CD8-positive, alpha-beta memory T cell (primary cell): ENCODE measurements at regions of chr15 and their contacts with region 1.

Region 1: DNA sequence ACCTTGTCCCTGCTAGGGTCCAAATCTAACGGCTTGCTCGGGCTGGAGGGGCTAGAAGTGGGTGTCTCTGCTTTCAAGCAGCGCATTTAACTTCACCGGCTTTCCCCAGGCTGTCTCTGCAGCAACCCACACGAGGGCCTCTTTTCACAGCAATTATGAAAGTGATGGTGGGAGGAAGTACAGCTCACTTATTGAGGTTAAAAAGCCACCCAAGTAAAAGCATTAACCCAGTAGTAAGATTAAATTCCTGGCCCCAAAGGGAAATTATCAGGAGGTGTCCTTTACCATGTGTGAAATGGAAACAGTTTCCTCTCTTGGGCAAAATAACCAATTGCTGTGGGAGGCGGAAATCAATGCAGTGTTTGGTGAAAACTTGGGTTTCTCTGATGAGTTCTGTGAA is 41.1 kb downstream of the NGRN start:
- DNase-seq: peak in 1 of 5 donors; percentile 6
- H3K4me3 ChIP-seq: no peak overlapping the region
- H3K4me3 Mint-ChIP-seq: peak overlapping the region in 6 of 7 donors; percentile 54 to 71 (median 63)
- H3K27ac ChIP-seq: no peak overlapping the region
- H3K27ac Mint-ChIP-seq: peak overlapping the region; percentile 2 to 93 (median 84)
- H3K4me1 ChIP-seq: peaks cover 18% of the 10 kb centered on the region
- H3K4me1 Mint-ChIP-seq: peaks cover 20 to 27% (median 26%) of the 10 kb centered on the region in 3 donors
- H3K27me3 ChIP-seq: no peaks in the 10 kb centered on the region
- H3K27me3 Mint-ChIP-seq: peaks cover 0 to 1% of the 10 kb centered on the region in 2 donors

Region 2: GRCh38 chr15:90294601-90295269 is 11.8 kb before region 1 on chr15:
- CTCF ChIA-PET with region 1: interaction called, 14 read pairs
- POLR2A ChIA-PET with region 1: no interaction called
- DNase-seq: no peak
- H3K4me3 ChIP-seq: no peak overlapping the region
- H3K4me3 Mint-ChIP-seq: no peak overlapping the region
- H3K27ac ChIP-seq: no peak overlapping the region
- H3K27ac Mint-ChIP-seq: no peak overlapping the region
- H3K4me1 ChIP-seq: no peaks in the 10 kb centered on the region
- H3K4me1 Mint-ChIP-seq: peaks cover 2 to 7% (median 5%) of the 10 kb centered on the region in 3 donors
- H3K27me3 ChIP-seq: no peaks in the 10 kb centered on the region
- H3K27me3 Mint-ChIP-seq: peaks cover 2 to 4% of the 10 kb centered on the region in 2 donors

Region 3: DNA sequence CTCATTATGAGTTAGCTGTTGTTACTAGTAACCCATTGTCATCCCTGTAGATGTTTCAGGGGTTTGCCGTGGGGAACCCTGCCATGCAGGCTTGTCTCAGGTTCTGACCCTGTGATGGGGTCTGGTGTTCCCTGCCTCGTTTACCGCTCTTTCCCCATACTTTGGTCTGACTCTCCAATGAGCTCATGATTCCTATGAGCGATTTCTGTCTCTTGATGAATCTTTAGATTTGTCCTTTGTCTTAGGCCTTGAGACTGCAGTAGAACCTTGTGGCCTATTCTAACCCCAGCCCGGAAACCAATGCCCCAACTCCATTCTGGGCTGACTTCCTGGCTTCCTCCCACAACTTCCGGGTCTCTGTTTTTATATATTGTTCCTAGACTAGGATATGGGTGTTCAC is 70.2 kb after region 1 on chr15:
- CTCF ChIA-PET with region 1: no interaction called
- POLR2A ChIA-PET with region 1: no interaction called
- DNase-seq: peak; percentile 56 to 81 (median 74)
- H3K4me3 ChIP-seq: peak overlapping the region; percentile 19
- H3K4me3 Mint-ChIP-seq: peak overlapping the region; percentile 0 to 84 (median 72)
- H3K27ac ChIP-seq: no peak overlapping the region
- H3K27ac Mint-ChIP-seq: peak overlapping the region; percentile 4 to 89 (median 70)
- H3K4me1 ChIP-seq: peaks cover 35% of the 10 kb centered on the region
- H3K4me1 Mint-ChIP-seq: peaks cover 39 to 52% (median 48%) of the 10 kb centered on the region in 3 donors
- H3K27me3 ChIP-seq: no peaks in the 10 kb centered on the region
- H3K27me3 Mint-ChIP-seq: no peaks in the 10 kb centered on the region